CD8-positive, alpha-beta T cell (primary cell): ENCODE measurements at regions of chr2 and their contacts with region 1.

Region 1: GRCh38 chr2:98412751-98413458 is 31.8 kb upstream of the INPP4A start:
- DNase-seq: peak; percentile 25 to 85 (median 54)
- ATAC-seq: peak; percentile 85
- H3K4me3 ChIP-seq: no peak overlapping the region
- H3K4me3 Mint-ChIP-seq: no peak overlapping the region
- H3K27ac ChIP-seq: no peak overlapping the region
- H3K27ac Mint-ChIP-seq: no peak overlapping the region
- H3K4me1 ChIP-seq: peaks cover 5% of the 10 kb centered on the region
- H3K4me1 Mint-ChIP-seq: peaks cover 12% of the 10 kb centered on the region
- H3K27me3 ChIP-seq: no peaks in the 10 kb centered on the region
- H3K27me3 Mint-ChIP-seq: no peaks in the 10 kb centered on the region
- CTCF ChIP-seq: peak; percentile 91

Region 2: GRCh38 chr2:97995734-97996624 is 416.9 kb before region 1 on chr2 and contains the start of gene TMEM131:
- CTCF ChIA-PET with region 1: no interaction called
- POLR2A ChIA-PET with region 1: no interaction called
- intact Hi-C with region 1: no loop called
- DNase-seq: peak; percentile 92 to 97 (median 96)
- ATAC-seq: peak; percentile 82
- H3K4me3 ChIP-seq: peak within 1 kb of the TSS; percentile 68 to 95
- H3K4me3 Mint-ChIP-seq: peak within 1 kb of the TSS; percentile 90
- H3K27ac ChIP-seq: peak within 1 kb of the TSS; percentile 82 to 87
- H3K27ac Mint-ChIP-seq: peak within 1 kb of the TSS; percentile 97
- H3K4me1 ChIP-seq: peaks cover 36% of the 10 kb centered on the region
- H3K4me1 Mint-ChIP-seq: peaks cover 43% of the 10 kb centered on the region
- H3K27me3 ChIP-seq: no peaks in the 10 kb centered on the region
- H3K27me3 Mint-ChIP-seq: no peaks in the 10 kb centered on the region
- CTCF ChIP-seq: no peak
- total RNA-seq, gene TMEM131: 26.8 to 31.5 TPM

Region 3: GRCh38 chr2:98376996-98377395 is 35.9 kb before region 1 on chr2:
- CTCF ChIA-PET with region 1: no interaction called
- POLR2A ChIA-PET with region 1: no interaction called
- intact Hi-C with region 1: no loop called
- DNase-seq: peak in 1 of 9 experiments; percentile 11
- ATAC-seq: no peak
- H3K4me3 ChIP-seq: no peak overlapping the region
- H3K4me3 Mint-ChIP-seq: no peak overlapping the region
- H3K27ac ChIP-seq: no peak overlapping the region
- H3K27ac Mint-ChIP-seq: no peak overlapping the region
- H3K4me1 ChIP-seq: no peaks in the 10 kb centered on the region
- H3K4me1 Mint-ChIP-seq: no peaks in the 10 kb centered on the region
- H3K27me3 ChIP-seq: peaks cover 0 to 5% of the 10 kb centered on the region in 2 experiments
- H3K27me3 Mint-ChIP-seq: peaks cover 18% of the 10 kb centered on the region
- CTCF ChIP-seq: no peak

Region 4: GRCh38 chr2:98426771-98427170 is 13.9 kb after region 1 on chr2:
- CTCF ChIA-PET with region 1: interaction called, 16 read pairs
- POLR2A ChIA-PET with region 1: interaction called, 3 read pairs
- intact Hi-C with region 1: no loop called
- DNase-seq: no peak
- ATAC-seq: no peak
- H3K4me3 ChIP-seq: no peak overlapping the region
- H3K4me3 Mint-ChIP-seq: no peak overlapping the region
- H3K27ac ChIP-seq: no peak overlapping the region
- H3K27ac Mint-ChIP-seq: no peak overlapping the region
- H3K4me1 ChIP-seq: no peaks in the 10 kb centered on the region
- H3K4me1 Mint-ChIP-seq: no peaks in the 10 kb centered on the region
- H3K27me3 ChIP-seq: no peaks in the 10 kb centered on the region
- H3K27me3 Mint-ChIP-seq: no peaks in the 10 kb centered on the region
- CTCF ChIP-seq: no peak

Region 5: DNA sequence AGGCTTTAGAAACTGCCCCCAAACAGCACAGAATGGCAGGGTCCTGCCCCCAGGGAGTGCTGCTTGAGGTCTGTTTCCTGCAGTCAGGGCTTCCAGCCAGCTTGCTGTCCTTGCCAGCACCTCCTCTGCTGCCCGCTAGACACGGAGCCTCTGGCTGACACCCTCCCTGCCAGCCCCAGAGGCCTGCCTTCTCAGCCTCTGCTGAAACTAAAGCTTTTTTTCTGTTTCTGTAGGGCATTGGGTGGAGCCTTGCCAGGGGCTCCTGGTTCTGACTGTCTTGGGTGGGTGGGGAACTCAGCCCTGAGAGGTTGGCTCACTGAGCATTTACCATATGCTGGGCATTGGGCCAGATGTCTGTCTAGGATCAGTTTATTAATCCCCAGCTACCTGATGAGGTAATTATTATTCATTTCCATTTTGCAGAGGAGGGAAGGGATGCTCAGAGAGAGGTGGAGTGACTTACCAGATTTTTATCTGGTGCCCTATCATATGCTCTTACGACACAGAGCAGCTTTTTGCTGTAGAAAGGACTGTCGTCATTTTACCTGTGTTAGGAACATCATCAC is 67.1 kb after region 1 on chr2:
- CTCF ChIA-PET with region 1: interaction called, 52 read pairs
- POLR2A ChIA-PET with region 1: no interaction called
- intact Hi-C with region 1: no loop called
- DNase-seq: peak in 4 of 9 experiments; percentile 55 to 63 (median 58)
- ATAC-seq: peak; percentile 72
- H3K4me3 ChIP-seq: no peak overlapping the region
- H3K4me3 Mint-ChIP-seq: peak overlapping the region; percentile 53
- H3K27ac ChIP-seq: peak overlapping the region; percentile 29 to 68
- H3K27ac Mint-ChIP-seq: peak overlapping the region; percentile 89
- H3K4me1 ChIP-seq: peaks cover 99% of the 10 kb centered on the region
- H3K4me1 Mint-ChIP-seq: peaks cover 98% of the 10 kb centered on the region
- H3K27me3 ChIP-seq: no peaks in the 10 kb centered on the region
- H3K27me3 Mint-ChIP-seq: no peaks in the 10 kb centered on the region
- CTCF ChIP-seq: no peak

Region 6: DNA sequence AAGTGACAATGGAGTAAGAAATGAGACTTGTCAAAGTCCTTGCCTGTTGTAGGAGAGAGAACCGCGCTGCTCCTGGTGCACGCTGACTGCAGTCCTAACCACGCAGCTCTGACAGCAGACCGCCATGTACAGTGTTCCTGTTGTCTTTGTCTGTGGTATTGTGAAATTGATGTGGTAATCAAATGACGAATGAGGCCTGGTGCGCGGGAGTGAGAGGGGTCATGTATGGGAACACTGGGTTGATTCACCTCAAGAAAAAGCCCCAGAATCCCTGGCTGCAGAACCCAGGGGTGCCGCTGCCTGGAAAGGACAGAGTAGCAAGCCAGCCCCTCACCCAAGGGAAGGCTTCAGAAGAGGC is 95.8 kb after region 1 on chr2:
- CTCF ChIA-PET with region 1: interaction called, 12 read pairs
- POLR2A ChIA-PET with region 1: no interaction called
- intact Hi-C with region 1: no loop called
- DNase-seq: peak in 8 of 9 experiments; percentile 21 to 83 (median 56)
- ATAC-seq: peak; percentile 88
- H3K4me3 ChIP-seq: no peak overlapping the region
- H3K4me3 Mint-ChIP-seq: peak overlapping the region; percentile 35
- H3K27ac ChIP-seq: no peak overlapping the region
- H3K27ac Mint-ChIP-seq: peak overlapping the region; percentile 85
- H3K4me1 ChIP-seq: peaks cover 83% of the 10 kb centered on the region
- H3K4me1 Mint-ChIP-seq: peaks cover 97% of the 10 kb centered on the region
- H3K27me3 ChIP-seq: no peaks in the 10 kb centered on the region
- H3K27me3 Mint-ChIP-seq: no peaks in the 10 kb centered on the region
- CTCF ChIP-seq: no peak

Region 7: DNA sequence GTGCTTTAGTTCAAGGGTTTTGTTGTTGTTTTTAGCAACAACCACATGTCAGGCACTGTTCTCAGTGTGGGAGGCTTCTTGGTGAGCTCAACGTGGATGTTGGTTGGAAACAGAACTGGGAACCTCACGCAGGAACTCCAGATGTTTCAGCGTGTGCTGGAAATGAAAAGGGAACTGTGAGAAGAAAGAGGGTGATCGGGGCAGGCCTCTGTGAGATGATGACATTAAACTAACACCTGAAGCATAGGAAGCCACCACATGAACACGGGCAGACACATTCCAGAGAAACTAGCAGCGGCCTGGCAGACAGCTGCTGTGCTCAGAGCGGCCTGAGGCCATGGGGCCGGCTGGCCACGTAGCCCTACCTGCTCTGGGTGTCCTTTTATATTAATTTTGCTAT is 129.0 kb after region 1 on chr2:
- CTCF ChIA-PET with region 1: interaction called, 14 read pairs
- POLR2A ChIA-PET with region 1: no interaction called
- intact Hi-C with region 1: no loop called
- DNase-seq: no peak
- ATAC-seq: no peak
- H3K4me3 ChIP-seq: no peak overlapping the region
- H3K4me3 Mint-ChIP-seq: no peak overlapping the region
- H3K27ac ChIP-seq: no peak overlapping the region
- H3K27ac Mint-ChIP-seq: no peak overlapping the region
- H3K4me1 ChIP-seq: peaks cover 3% of the 10 kb centered on the region
- H3K4me1 Mint-ChIP-seq: peaks cover 12% of the 10 kb centered on the region
- H3K27me3 ChIP-seq: no peaks in the 10 kb centered on the region
- H3K27me3 Mint-ChIP-seq: no peaks in the 10 kb centered on the region
- CTCF ChIP-seq: no peak

Region 8: DNA sequence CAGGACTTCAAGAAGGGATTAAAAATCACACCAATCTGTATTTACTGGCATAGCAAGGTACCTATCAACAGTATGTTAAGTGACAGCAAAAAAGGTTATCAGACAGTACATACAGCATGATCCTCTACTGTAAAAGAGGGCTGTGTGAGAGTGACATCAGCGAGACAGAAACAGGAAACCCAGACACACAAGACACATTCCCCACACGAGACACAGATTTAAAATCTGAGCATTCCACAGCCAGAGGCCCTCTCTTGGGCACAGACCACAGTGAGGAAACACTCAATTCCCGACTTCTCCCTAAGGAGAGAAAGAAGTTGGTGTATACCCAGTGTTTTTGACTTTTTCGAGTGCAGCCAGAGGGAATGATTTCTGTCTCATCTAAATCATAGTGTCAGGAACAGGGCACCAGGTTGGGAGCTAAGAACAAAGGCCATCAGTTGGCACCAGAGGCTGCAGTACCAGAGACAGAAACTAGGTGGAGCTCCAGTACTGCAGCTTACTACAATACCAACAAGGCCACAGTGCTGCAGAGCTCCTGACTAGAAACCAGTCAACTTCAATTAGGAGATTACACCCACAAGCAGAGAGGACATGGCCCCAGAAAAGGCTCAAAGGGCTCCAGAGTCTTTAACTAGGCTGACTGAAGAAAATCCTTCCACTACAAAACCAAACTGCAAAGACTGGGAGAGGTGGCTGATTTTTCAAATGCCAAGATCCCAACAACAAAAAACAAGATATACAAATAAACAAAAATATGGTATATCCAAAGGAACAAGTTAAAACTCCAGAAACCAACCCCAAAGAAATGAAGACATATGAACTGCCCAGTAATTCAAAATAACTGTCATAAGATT is 236.5 kb after region 1 on chr2:
- CTCF ChIA-PET with region 1: interaction called, 3 read pairs
- POLR2A ChIA-PET with region 1: no interaction called
- intact Hi-C with region 1: loop called in 1 of 2 experiments (anchors 2 kb)
- DNase-seq: peak; percentile 73 to 92 (median 83)
- ATAC-seq: peak; percentile 92
- H3K4me3 ChIP-seq: no peak overlapping the region
- H3K4me3 Mint-ChIP-seq: peak overlapping the region; percentile 37
- H3K27ac ChIP-seq: peak overlapping the region in 1 of 2 experiments; percentile 47
- H3K27ac Mint-ChIP-seq: peak overlapping the region; percentile 99
- H3K4me1 ChIP-seq: peaks cover 52% of the 10 kb centered on the region
- H3K4me1 Mint-ChIP-seq: peaks cover 63% of the 10 kb centered on the region
- H3K27me3 ChIP-seq: no peaks in the 10 kb centered on the region
- H3K27me3 Mint-ChIP-seq: no peaks in the 10 kb centered on the region
- CTCF ChIP-seq: peak; percentile 98

Region 9: DNA sequence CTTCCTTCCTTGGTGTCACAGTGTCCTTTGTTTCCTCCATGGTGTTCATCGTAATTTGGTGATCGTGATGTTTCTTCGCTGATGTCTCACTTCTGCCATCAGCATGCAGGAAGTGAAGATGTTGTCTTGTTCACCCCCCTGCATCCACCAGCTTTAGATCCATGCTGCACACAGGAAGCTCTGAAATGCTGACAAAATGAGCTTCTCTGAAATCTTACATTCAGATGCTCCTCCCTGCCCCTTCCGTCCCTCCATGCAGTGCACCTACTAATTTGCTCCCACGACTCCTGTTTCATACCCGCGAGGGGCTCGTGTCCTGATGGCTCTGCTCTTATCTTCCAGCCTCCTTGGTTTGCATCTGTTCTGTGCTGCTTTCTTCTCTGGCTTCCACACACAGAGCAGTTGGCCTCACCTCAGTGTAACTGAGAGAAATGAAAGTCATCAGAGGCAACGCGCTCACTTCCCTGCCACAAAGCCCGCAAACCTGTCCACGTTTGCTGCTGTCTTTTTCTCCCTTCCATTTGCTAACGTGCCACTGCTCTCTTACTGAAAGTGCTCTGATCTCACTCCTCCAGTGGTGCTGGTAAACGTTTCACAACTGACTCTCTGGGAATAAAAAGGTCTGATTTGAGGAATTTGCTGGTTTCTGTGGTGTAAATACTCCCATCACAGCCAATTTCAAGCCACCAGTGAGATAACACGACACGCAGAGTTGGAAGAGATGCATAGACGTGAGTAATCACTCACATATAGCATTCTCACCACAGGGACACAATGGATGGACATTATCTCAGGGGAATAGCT is 359.0 kb after region 1 on chr2:
- CTCF ChIA-PET with region 1: no interaction called
- POLR2A ChIA-PET with region 1: no interaction called
- intact Hi-C with region 1: no loop called
- DNase-seq: peak; percentile 36 to 93 (median 68)
- ATAC-seq: peak; percentile 68
- H3K4me3 ChIP-seq: peak overlapping the region; percentile 39 to 50
- H3K4me3 Mint-ChIP-seq: peak overlapping the region; percentile 87
- H3K27ac ChIP-seq: peak overlapping the region; percentile 79 to 89
- H3K27ac Mint-ChIP-seq: peak overlapping the region; percentile 98
- H3K4me1 ChIP-seq: peaks cover 67% of the 10 kb centered on the region
- H3K4me1 Mint-ChIP-seq: peaks cover 77% of the 10 kb centered on the region
- H3K27me3 ChIP-seq: no peaks in the 10 kb centered on the region
- H3K27me3 Mint-ChIP-seq: no peaks in the 10 kb centered on the region
- CTCF ChIP-seq: no peak